Activated CD4-positive, alpha-beta T cell treated with anti-CD3 and anti-CD28 coated beads for 36 hours (primary cell): ENCODE measurements at regions of chr13 and their contacts with region 1.

Region 1: GRCh38 chr13:103107580-103107979 is 41.4 kb upstream of the SLC10A2 start:
- DNase-seq: no peak
- ATAC-seq: no peak
- H3K4me3 Mint-ChIP-seq: no peak overlapping the region
- H3K27ac Mint-ChIP-seq: no peak overlapping the region
- H3K4me1 Mint-ChIP-seq: no peaks in the 10 kb centered on the region
- H3K27me3 Mint-ChIP-seq: no peaks in the 10 kb centered on the region

Region 2: DNA sequence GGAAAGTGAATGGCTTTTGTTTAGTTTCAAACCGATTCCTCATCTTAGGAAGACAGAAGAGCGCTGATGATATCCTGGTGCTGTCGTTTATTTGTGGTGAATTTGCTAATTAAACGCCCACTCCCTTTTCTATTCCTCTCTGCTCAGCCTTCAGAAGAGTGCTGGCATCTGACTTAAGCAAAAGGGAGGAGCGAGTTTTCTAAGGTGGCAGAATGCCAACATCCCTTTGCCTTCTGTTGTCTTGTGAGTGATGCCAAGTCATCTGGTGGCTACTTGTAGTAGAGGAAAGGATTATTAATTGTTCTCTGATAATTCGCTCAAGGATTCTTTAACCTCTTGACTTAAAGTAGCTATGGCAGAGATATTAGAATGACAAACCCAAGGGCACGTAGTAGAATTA is 193.7 kb before region 1 on chr13:
- CTCF ChIA-PET with region 1: no interaction called
- POLR2A ChIA-PET with region 1: no interaction called
- intact Hi-C with region 1: no loop called
- DNase-seq: no peak
- ATAC-seq: no peak
- H3K4me3 Mint-ChIP-seq: no peak overlapping the region
- H3K27ac Mint-ChIP-seq: no peak overlapping the region
- H3K4me1 Mint-ChIP-seq: no peaks in the 10 kb centered on the region
- H3K27me3 Mint-ChIP-seq: peaks cover 18% of the 10 kb centered on the region

Region 3: DNA sequence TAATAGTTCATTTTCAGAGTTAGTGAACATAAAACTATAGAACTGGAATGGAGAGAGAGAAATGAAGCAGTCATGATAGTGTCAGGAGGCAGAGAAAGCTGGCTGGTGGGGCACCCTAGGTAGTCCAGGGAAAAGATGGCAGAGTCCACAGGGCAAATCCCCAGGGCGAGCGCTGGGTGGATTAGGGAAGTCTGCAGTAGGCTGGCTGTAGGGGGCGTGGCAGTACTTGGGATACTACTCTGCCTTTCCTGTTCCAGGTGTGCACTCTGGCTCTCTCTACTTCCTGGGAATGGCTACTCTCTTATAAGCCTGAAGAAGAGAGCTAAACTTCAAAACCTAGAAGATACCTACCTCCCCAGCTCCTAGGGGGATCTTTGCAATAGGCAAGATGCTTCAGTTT is 191.5 kb after region 1 on chr13:
- CTCF ChIA-PET with region 1: no interaction called
- POLR2A ChIA-PET with region 1: interaction called, 13 read pairs
- intact Hi-C with region 1: no loop called
- DNase-seq: no peak
- ATAC-seq: no peak
- H3K4me3 Mint-ChIP-seq: no peak overlapping the region
- H3K27ac Mint-ChIP-seq: no peak overlapping the region
- H3K4me1 Mint-ChIP-seq: no peaks in the 10 kb centered on the region
- H3K27me3 Mint-ChIP-seq: no peaks in the 10 kb centered on the region